BJ (cell line): ENCODE measurements at regions of chr22 and their contacts with region 1.

Region 1: GRCh38 chr22:46116491-46116958 is 33.8 kb upstream of the PPARA start:
- DNase-seq: no peak
- H3K4me3 ChIP-seq: no peak overlapping the region
- H3K27me3 ChIP-seq: no peaks in the 10 kb centered on the region
- CTCF ChIP-seq: peak; percentile 91

Region 2: GRCh38 chr22:46013460-46014416 is 102.8 kb before region 1 on chr22:
- CTCF ChIA-PET with region 1: interaction called, 111 read pairs
- POLR2A ChIA-PET with region 1: interaction called, 3 read pairs
- DNase-seq: peak; percentile 80
- H3K4me3 ChIP-seq: peak overlapping the region; percentile 47
- H3K27me3 ChIP-seq: no peaks in the 10 kb centered on the region
- CTCF ChIP-seq: peak; percentile 81

Region 3: GRCh38 chr22:46071451-46072109 is 44.9 kb before region 1 on chr22:
- CTCF ChIA-PET with region 1: interaction called, 10 read pairs
- POLR2A ChIA-PET with region 1: interaction called, 3 read pairs
- DNase-seq: no peak
- H3K4me3 ChIP-seq: peak overlapping the region; percentile 98
- H3K27me3 ChIP-seq: no peaks in the 10 kb centered on the region
- CTCF ChIP-seq: no peak

Region 4: DNA sequence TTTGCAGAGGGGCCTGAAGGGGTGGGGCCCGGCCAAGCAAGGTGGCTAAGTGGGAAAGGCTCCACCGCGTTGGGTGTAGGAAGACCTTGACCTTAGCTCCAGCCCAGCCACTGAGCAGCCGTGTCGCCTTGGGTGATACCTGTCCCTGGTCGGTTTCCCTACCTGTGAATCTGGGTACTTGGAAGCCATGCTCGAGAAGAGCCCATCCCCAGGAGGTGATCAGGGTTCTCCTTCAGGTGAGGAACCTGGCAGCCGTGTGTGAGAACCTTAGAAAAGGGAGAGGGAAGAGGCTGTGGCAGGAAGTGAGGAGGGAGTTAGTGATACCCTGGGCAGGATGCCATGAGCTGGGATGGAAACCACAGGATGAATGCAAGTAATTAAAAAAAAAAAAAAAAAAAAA is 55.4 kb after region 1 on chr22:
- CTCF ChIA-PET with region 1: no interaction called
- POLR2A ChIA-PET with region 1: no interaction called
- DNase-seq: peak; percentile 52
- H3K4me3 ChIP-seq: no peak overlapping the region
- H3K27me3 ChIP-seq: no peaks in the 10 kb centered on the region
- CTCF ChIP-seq: no peak

Region 5: GRCh38 chr22:46309526-46310085 is 193.1 kb after region 1 on chr22:
- CTCF ChIA-PET with region 1: interaction called, 183 read pairs
- POLR2A ChIA-PET with region 1: no interaction called
- DNase-seq: no peak
- H3K4me3 ChIP-seq: no peak overlapping the region
- H3K27me3 ChIP-seq: no peaks in the 10 kb centered on the region
- CTCF ChIP-seq: no peak